Activated T-helper 2 cell treated with anti-CD3 and anti-CD28 coated beads, Interferon-gamma antibody, Interleukin-2, Interleukin-4, amounts not matched to agents 10 μg/mL and 5 μg/mL and 100 μg/mL, durations not matched to agents 14 hours and 24 hours and 36 hours (primary cell): ENCODE measurements at regions of chr21 and their contacts with region 1.

Region 1: GRCh38 chr21:32412162-32413014 is at the start of gene EVA1C:
- DNase-seq: peak; percentile 34
- H3K4me3 Mint-ChIP-seq: peak within 1 kb of the TSS; percentile 93
- H3K27ac Mint-ChIP-seq: peak within 1 kb of the TSS; percentile 91
- H3K4me1 Mint-ChIP-seq: peaks cover 17% of the 10 kb centered on the region
- H3K27me3 Mint-ChIP-seq: no peaks in the 10 kb centered on the region
- total RNA-seq, gene EVA1C: 8.1 and 8.4 TPM in 2 replicates

Region 2: GRCh38 chr21:32278518-32279376 is 133.6 kb before region 1 on chr21 and contains the start of gene MIS18A:
- intact Hi-C with region 1: loop called (anchors 5 kb)
- DNase-seq: peak; percentile 95
- H3K4me3 Mint-ChIP-seq: peak within 1 kb of the TSS; percentile 99
- H3K27ac Mint-ChIP-seq: peak within 1 kb of the TSS; percentile 97
- H3K4me1 Mint-ChIP-seq: peaks cover 27% of the 10 kb centered on the region
- H3K27me3 Mint-ChIP-seq: no peaks in the 10 kb centered on the region
- total RNA-seq, gene MIS18A: 25.0 and 26.3 TPM in 2 replicates

Region 3: GRCh38 chr21:32494934-32495703 is 82.7 kb after region 1 on chr21:
- intact Hi-C with region 1: loop called (anchors 5 kb)
- DNase-seq: no peak
- H3K4me3 Mint-ChIP-seq: no peak overlapping the region
- H3K27ac Mint-ChIP-seq: no peak overlapping the region
- H3K4me1 Mint-ChIP-seq: no peaks in the 10 kb centered on the region
- H3K27me3 Mint-ChIP-seq: no peaks in the 10 kb centered on the region

Region 4: DNA sequence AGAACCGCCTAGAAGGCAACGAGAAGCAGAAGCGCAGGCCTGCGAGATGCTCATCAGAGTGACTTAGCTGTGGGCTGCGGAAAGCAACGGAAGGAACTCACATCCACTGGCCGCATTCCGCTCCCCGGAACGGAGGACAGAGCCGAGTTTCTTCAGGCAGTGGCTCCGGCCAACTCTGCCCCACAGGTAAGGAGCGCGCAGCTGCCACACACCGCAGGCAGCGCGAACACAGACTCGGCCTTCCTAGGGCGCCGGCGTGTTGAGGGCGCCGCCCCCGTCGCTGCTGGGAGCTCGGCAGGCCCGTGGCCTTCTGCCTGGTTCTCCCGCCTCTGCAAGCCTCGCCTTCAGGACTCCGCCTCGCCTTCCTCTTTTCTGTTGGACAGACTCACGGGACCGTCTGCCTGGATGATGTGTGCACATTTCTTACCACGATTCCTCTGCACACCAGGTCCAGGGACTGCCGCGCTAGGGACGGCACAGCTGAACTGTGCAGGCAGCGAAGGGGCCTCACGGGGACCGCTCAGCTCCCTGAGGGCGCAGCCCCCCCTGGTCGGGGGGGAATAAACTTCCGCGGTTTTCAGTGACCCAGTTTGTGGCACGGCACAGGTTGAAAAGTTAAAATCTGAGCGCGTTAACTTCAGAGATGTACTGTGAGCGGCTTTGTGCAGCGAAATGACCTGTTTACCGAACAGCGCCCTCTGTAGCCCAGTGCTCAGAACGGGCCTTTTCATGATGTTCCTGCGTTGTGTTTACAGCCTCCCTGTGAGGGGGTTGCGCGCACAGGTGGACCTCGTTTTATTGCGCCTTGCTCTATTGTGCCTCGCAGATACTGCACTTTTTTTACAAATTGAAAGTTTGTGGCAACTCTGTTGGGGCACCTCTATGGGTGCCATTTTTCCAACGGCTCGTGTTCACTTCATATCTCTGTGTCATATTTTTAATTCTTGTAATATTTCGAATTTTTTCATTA is 157.2 kb after region 1 on chr21:
- intact Hi-C with region 1: loop called (anchors 1 kb)
- DNase-seq: peak; percentile 70
- H3K4me3 Mint-ChIP-seq: peak overlapping the region; percentile 86
- H3K27ac Mint-ChIP-seq: peak overlapping the region; percentile 19
- H3K4me1 Mint-ChIP-seq: peaks cover 16% of the 10 kb centered on the region
- H3K27me3 Mint-ChIP-seq: peaks cover 10% of the 10 kb centered on the region

Region 5: GRCh38 chr21:32727687-32728455 is 315.5 kb after region 1 on chr21 and contains the start of gene SYNJ1:
- intact Hi-C with region 1: loop called (anchors 5 kb)
- DNase-seq: peak; percentile 93
- H3K4me3 Mint-ChIP-seq: peak within 1 kb of the TSS; percentile 98
- H3K27ac Mint-ChIP-seq: peak within 1 kb of the TSS; percentile 95
- H3K4me1 Mint-ChIP-seq: peaks cover 40% of the 10 kb centered on the region
- H3K27me3 Mint-ChIP-seq: no peaks in the 10 kb centered on the region
- total RNA-seq, gene SYNJ1: 11.8 and 16.5 TPM in 2 replicates